ENCODE measurements at regions of chr2 and their contacts with region 1.

Region 1: DNA sequence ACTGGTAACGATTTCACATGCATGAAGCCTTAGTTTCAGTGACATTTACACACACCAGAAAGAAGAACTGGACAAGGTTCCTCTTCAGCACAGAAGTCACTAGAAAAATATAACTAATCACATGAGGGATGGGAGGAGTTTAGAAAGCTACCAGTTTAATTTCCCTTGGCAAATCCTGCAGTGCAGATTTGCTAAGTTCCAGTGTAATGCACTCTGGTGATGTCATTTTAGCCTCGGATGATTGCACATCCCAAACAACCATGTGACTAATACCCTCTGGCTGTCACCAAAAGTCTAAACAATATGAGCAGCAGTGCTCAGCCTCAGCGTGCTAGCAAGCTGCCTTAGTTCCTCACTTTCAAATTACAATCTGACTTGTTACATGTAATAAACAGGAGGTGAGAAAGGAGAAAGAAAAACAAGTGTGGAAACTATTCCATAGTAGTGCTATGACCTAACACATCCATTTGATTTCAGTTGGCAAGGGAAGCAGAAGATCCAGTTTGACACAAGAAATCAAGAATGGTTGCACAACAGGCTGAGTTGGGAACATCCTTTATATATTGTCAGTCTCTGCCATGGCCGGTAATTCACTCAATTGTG is 35.3 kb upstream of the PPP1CB start:
- DNase-seq: peak; percentile 71 to 77
- ATAC-seq: peak; percentile 78 to 87
- H3K4me3 ChIP-seq: peak overlapping the region in 2 of 4 donors; percentile 1
- H3K27ac ChIP-seq: peak overlapping the region; percentile 91 to 98 (median 93)
- H3K4me1 ChIP-seq: peaks cover 22 to 24% of the 10 kb centered on the region in 2 donors
- H3K27me3 ChIP-seq: no peaks in the 10 kb centered on the region
- CTCF ChIP-seq: no peak
- POLR2A ChIP-seq: peak; percentile 40 to 65

Region 2: DNA sequence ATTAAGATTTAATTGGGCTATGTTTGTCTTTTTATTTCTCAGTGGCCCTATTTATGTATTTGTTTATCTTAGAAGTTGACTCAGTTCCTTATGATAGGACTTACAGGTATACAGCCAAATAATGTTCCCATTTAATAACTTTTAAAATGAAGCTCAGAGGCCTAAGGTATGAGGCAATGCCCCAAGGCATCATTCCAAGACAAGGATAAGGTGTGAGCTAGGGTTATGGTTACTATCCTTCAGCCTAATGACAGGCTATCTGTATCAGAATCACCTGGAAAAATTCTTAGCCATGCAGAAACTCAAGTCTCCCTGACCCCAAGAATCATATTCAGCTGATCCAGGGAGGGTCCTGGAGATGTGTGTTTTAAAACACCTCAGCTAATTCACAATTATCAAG is 1295.3 kb before region 1 on chr2:
- in situ Hi-C with region 1: no loop called
- intact Hi-C with region 1: no loop called
- DNase-seq: no peak
- ATAC-seq: no peak
- H3K4me3 ChIP-seq: no peak overlapping the region
- H3K27ac ChIP-seq: no peak overlapping the region
- H3K4me1 ChIP-seq: no peaks in the 10 kb centered on the region
- H3K27me3 ChIP-seq: no peaks in the 10 kb centered on the region
- CTCF ChIP-seq: no peak
- POLR2A ChIP-seq: no peak

Region 3: DNA sequence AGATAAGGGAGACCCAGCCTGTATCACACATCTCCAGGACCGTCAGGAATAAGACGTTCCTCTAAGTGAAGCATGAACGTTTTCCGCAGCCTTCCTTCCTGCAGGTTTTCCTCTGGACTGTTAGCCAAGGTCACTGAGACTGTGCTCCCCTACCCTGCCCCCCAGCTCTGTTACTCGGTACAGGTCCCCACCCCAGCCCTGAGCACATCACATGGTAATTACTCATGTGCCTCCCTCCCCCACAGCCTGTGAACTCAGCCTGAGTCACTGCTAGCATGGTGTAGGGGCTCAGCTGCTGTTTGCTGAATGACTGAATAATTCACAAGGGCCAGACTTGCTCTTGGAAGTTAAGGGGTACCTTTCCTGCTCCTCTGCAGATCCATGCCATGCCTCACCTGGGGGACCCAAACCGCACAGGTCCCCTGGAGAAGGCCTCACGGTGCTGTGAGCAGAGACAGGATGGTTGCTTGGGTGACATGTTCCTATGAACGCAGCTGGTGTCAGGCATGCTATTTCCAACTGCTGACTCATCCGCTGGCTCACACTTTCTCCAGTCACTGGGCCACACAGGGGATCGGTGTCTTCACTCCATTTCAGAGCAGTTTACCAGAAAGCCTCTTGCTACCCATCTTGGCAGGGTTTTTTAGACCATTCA is 132.3 kb before region 1 on chr2:
- in situ Hi-C with region 1: no loop called
- intact Hi-C with region 1: loop called (anchors 1 kb)
- DNase-seq: peak; percentile 95 to 97
- ATAC-seq: peak; percentile 83
- H3K4me3 ChIP-seq: peak overlapping the region in 1 of 4 donors; percentile 8
- H3K27ac ChIP-seq: peak overlapping the region; percentile 90 to 99 (median 94)
- H3K4me1 ChIP-seq: peaks cover 66% of the 10 kb centered on the region in 2 donors
- H3K27me3 ChIP-seq: no peaks in the 10 kb centered on the region
- CTCF ChIP-seq: peak in 1 of 5 experiments; percentile 12
- POLR2A ChIP-seq: peak; percentile 58 to 74

Region 4: GRCh38 chr2:28606986-28607441 is 109.4 kb before region 1 on chr2:
- in situ Hi-C with region 1: no loop called
- intact Hi-C with region 1: loop called (anchors 1 kb)
- DNase-seq: no peak
- ATAC-seq: peak in 1 of 2 donors; percentile 9
- H3K4me3 ChIP-seq: no peak overlapping the region
- H3K27ac ChIP-seq: peak overlapping the region; percentile 83 to 93 (median 89)
- H3K4me1 ChIP-seq: peaks cover 39 to 47% of the 10 kb centered on the region in 2 donors
- H3K27me3 ChIP-seq: no peaks in the 10 kb centered on the region
- CTCF ChIP-seq: peak in 4 of 5 experiments; percentile 20 to 56 (median 44)
- POLR2A ChIP-seq: no peak

Region 5: DNA sequence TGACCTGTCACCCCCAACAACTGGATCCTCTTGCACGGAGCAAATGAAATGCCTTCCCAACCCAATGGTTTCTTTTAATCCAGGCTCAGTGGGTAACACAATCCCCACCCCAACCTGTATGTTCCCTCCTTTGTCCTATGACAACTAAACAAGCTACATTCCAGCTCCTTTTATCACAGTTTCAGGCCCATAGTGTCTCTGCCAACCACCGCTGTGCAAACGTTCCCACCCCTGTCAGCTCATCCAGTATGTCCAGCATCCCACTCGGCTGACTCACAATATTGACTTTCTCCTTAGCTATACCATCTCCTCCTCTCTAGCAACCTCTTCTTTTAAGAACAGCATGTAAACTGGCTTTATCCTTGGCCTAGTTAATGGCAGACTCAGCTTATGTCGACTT is 82.6 kb before region 1 on chr2:
- in situ Hi-C with region 1: no loop called
- intact Hi-C with region 1: loop called (anchors 2 kb)
- DNase-seq: no peak
- ATAC-seq: no peak
- H3K4me3 ChIP-seq: no peak overlapping the region
- H3K27ac ChIP-seq: peak overlapping the region; percentile 74 to 92 (median 88)
- H3K4me1 ChIP-seq: peaks cover 47 to 69% of the 10 kb centered on the region in 2 donors
- H3K27me3 ChIP-seq: no peaks in the 10 kb centered on the region
- CTCF ChIP-seq: no peak
- POLR2A ChIP-seq: no peak

Region 6: DNA sequence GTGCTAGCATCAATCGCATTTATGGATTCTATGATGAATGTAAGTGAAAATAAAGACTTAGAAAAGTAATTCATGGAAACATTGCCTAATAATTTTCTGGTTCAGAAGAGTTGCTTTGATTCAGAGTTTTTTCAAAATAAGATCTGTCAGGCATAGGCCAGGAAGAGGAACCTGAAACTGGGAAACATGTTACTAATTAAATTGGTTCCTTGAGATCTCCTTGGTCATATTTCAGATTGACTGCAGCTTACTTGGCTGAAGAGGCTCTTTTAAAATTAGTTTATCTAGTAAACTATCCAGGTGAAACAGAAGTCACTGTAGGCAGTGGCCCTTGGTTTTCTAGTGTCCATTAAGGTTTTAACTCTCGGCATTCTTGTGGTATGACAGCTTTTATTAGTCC is 62.6 kb after region 1 on chr2:
- in situ Hi-C with region 1: no loop called
- intact Hi-C with region 1: loop called (anchors 2 kb)
- DNase-seq: no peak
- ATAC-seq: no peak
- H3K4me3 ChIP-seq: no peak overlapping the region
- H3K27ac ChIP-seq: peak overlapping the region; percentile 75 to 87 (median 82)
- H3K4me1 ChIP-seq: peaks cover 47 to 60% of the 10 kb centered on the region in 2 donors
- H3K27me3 ChIP-seq: no peaks in the 10 kb centered on the region
- CTCF ChIP-seq: no peak
- POLR2A ChIP-seq: no peak

Region 7: GRCh38 chr2:28821295-28821958 is 105.1 kb after region 1 on chr2:
- in situ Hi-C with region 1: no loop called
- intact Hi-C with region 1: no loop called
- DNase-seq: peak; percentile 12 to 28
- ATAC-seq: peak; percentile 70 to 94
- H3K4me3 ChIP-seq: no peak overlapping the region
- H3K27ac ChIP-seq: no peak overlapping the region
- H3K4me1 ChIP-seq: no peaks in the 10 kb centered on the region
- H3K27me3 ChIP-seq: no peaks in the 10 kb centered on the region
- CTCF ChIP-seq: peak; percentile 67 to 80 (median 74)
- POLR2A ChIP-seq: no peak

Region 8: DNA sequence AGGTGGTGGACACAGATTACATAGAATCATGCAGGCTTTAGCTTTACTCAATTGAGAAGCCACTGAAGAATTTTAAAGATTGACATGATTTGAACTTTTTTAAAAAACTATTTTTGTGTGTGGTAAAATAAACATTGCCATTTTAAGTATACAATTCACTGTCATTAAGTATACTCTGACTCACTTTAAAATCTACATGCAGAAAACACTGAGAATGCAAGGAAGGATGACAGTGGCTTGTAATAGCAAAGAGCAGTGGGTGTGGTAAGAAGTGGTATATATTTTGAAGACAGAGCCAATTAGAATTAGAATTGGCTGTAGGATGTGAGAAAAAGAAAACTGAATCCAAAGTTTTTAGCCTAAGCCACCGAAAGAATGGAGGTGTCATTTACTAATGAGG is 138.8 kb after region 1 on chr2:
- in situ Hi-C with region 1: no loop called
- intact Hi-C with region 1: no loop called
- DNase-seq: no peak
- ATAC-seq: no peak
- H3K4me3 ChIP-seq: no peak overlapping the region
- H3K27ac ChIP-seq: no peak overlapping the region
- H3K4me1 ChIP-seq: no peaks in the 10 kb centered on the region
- H3K27me3 ChIP-seq: no peaks in the 10 kb centered on the region
- CTCF ChIP-seq: no peak
- POLR2A ChIP-seq: no peak